Naive thymus-derived CD4-positive, alpha-beta T cell (primary cell): ENCODE measurements at regions of chr11 and their contacts with region 1.

Region 1: DNA sequence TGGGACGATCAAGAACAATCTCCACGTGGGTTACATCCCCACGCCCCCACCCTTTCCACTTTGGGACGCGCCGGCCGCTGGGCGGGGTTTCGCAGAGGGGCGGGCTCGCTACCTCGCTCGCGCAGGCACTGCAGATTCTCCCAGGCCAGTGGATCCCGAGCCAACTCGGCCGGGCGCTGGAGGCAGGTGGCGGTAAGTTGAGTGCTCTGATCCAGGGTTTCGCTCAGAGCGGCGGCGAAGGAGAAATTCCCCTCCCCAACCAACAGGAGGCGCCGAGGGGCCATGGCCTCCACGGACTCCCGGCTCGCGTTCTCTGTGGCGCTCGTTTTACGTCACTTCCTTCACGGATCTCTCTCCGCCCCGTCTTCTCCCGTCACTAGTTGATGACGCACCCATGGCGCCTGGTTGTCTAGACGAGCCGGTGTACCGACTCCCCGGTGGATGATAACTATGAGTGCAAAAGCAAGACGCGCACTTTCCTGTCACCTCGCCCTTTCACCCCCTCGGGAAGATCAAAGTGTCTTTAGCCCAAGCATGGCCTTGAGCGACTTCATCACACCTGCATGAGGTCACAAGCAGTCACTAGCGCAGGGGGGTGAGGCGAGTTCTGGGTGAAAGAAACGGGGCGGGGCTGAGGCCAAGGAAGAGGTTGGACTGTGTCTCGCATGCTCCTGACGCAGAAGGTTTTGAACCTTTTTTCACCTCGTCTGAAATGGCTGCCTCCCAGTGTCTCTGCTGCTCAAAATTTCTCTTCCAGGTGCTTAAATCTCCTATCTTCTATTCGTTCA is at the starts of genes CFAP68 and FDXACB1:
- DNase-seq: peak; percentile 89 to 99 (median 98)
- ATAC-seq: peak; percentile 93
- H3K4me3 ChIP-seq: peak within 1 kb of the TSS; percentile 93
- H3K4me3 Mint-ChIP-seq: peak within 1 kb of the TSS; percentile 83 to 99 (median 95)
- H3K27ac ChIP-seq: peak within 1 kb of the TSS; percentile 96
- H3K27ac Mint-ChIP-seq: peak within 1 kb of the TSS; percentile 98 to 100 (median 100)
- H3K4me1 ChIP-seq: peaks cover 7% of the 10 kb centered on the region in 2 donors
- H3K4me1 Mint-ChIP-seq: peaks cover 9 to 32% (median 26%) of the 10 kb centered on the region in 7 donors
- H3K27me3 ChIP-seq: no peaks in the 10 kb centered on the region
- H3K27me3 Mint-ChIP-seq: no peaks in the 10 kb centered on the region
- total RNA-seq, gene CFAP68: 13.7 to 24.9 (median 18.3) TPM
- total RNA-seq, gene FDXACB1: 2.7 to 6.0 (median 5.3) TPM

Region 2: GRCh38 chr11:111500481-111500880 is 378.6 kb before region 1 on chr11:
- CTCF ChIA-PET with region 1: no interaction called
- POLR2A ChIA-PET with region 1: no interaction called
- intact Hi-C with region 1: no loop called
- DNase-seq: no peak
- ATAC-seq: no peak
- H3K4me3 ChIP-seq: no peak overlapping the region
- H3K4me3 Mint-ChIP-seq: no peak overlapping the region
- H3K27ac ChIP-seq: no peak overlapping the region
- H3K27ac Mint-ChIP-seq: no peak overlapping the region
- H3K4me1 ChIP-seq: no peaks in the 10 kb centered on the region
- H3K4me1 Mint-ChIP-seq: no peaks in the 10 kb centered on the region
- H3K27me3 ChIP-seq: no peaks in the 10 kb centered on the region
- H3K27me3 Mint-ChIP-seq: peaks cover 21 to 67% (median 35%) of the 10 kb centered on the region in 5 donors

Region 3: GRCh38 chr11:111766093-111766833 is 112.8 kb before region 1 on chr11 and contains the start of gene PPP2R1B:
- CTCF ChIA-PET with region 1: no interaction called
- POLR2A ChIA-PET with region 1: no interaction called
- intact Hi-C with region 1: loop called (anchors 1 to 2 kb)
- DNase-seq: peak; percentile 50 to 78 (median 69)
- ATAC-seq: peak; percentile 98
- H3K4me3 ChIP-seq: peak within 1 kb of the TSS; percentile 95
- H3K4me3 Mint-ChIP-seq: peak within 1 kb of the TSS; percentile 94 to 100 (median 98)
- H3K27ac ChIP-seq: peak within 1 kb of the TSS; percentile 86
- H3K27ac Mint-ChIP-seq: peak within 1 kb of the TSS; percentile 83 to 99 (median 95)
- H3K4me1 ChIP-seq: peaks cover 7% of the 10 kb centered on the region in 2 donors
- H3K4me1 Mint-ChIP-seq: peaks cover 25 to 48% (median 38%) of the 10 kb centered on the region in 7 donors
- H3K27me3 ChIP-seq: no peaks in the 10 kb centered on the region
- H3K27me3 Mint-ChIP-seq: no peaks in the 10 kb centered on the region
- total RNA-seq, gene PPP2R1B: 25.8 to 49.2 (median 34.0) TPM

Region 4: DNA sequence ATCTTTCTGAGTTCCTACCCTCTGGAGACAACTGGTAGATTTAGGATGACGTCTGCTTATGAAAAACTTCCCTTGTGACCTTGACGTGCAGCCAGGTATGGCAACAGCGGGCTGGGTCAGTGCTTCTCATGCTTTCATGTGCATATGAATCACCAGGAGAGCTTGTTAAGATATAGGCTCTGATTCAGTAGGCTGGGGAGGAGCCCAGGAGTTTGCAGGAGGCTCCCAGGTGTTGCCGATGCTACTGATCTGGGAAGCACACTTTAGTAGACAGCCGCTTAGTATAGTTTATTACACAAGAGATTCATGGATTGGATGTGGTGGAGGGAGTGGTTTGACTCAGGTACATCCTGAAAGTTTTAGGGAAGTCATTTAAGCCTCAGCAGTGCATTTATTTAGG is 81.9 kb after region 1 on chr11:
- CTCF ChIA-PET with region 1: no interaction called
- POLR2A ChIA-PET with region 1: no interaction called
- intact Hi-C with region 1: no loop called
- DNase-seq: no peak
- ATAC-seq: no peak
- H3K4me3 ChIP-seq: no peak overlapping the region
- H3K4me3 Mint-ChIP-seq: no peak overlapping the region
- H3K27ac ChIP-seq: no peak overlapping the region
- H3K27ac Mint-ChIP-seq: no peak overlapping the region
- H3K4me1 ChIP-seq: no peaks in the 10 kb centered on the region
- H3K4me1 Mint-ChIP-seq: no peaks in the 10 kb centered on the region
- H3K27me3 ChIP-seq: no peaks in the 10 kb centered on the region
- H3K27me3 Mint-ChIP-seq: peaks cover 0 to 4% (median 0%) of the 10 kb centered on the region in 5 donors

Region 5: DNA sequence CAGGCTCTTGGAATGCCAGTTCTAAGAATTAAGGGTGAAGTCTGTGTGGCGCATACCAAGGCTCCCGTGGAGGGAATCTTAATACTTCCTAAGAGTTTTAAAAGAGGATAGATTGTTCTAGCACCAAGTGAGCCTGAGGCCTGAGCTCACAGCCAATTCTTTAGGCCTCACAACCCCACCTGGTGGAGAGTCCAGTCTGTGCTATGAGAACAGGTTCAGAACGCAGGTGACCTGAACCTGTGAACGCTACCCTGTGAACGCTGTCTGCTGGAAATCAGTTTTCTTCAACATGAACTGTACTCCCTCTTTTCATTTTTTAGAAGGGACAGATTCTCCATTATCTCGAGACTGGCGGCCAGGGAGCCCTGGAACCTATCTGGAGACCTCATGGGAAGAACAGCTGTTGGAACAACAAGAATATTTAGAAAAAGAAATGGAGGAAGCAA is 103.0 kb after region 1 on chr11:
- CTCF ChIA-PET with region 1: interaction called, 6 read pairs
- POLR2A ChIA-PET with region 1: no interaction called
- intact Hi-C with region 1: loop called (anchors 1 kb)
- DNase-seq: peak; percentile 7 to 60 (median 44)
- ATAC-seq: peak; percentile 84
- H3K4me3 ChIP-seq: no peak overlapping the region
- H3K4me3 Mint-ChIP-seq: no peak overlapping the region
- H3K27ac ChIP-seq: no peak overlapping the region
- H3K27ac Mint-ChIP-seq: peak overlapping the region in 1 of 9 donors; percentile 22
- H3K4me1 ChIP-seq: peaks cover 0 to 3% of the 10 kb centered on the region in 2 donors
- H3K4me1 Mint-ChIP-seq: peaks cover 0 to 10% (median 7%) of the 10 kb centered on the region in 7 donors
- H3K27me3 ChIP-seq: peaks cover 0 to 3% of the 10 kb centered on the region in 2 donors
- H3K27me3 Mint-ChIP-seq: peaks cover 7 to 29% (median 27%) of the 10 kb centered on the region in 5 donors

Region 6: GRCh38 chr11:112074026-112074811 is 195.2 kb after region 1 on chr11 and contains the start of gene NKAPD1:
- CTCF ChIA-PET with region 1: no interaction called
- POLR2A ChIA-PET with region 1: no interaction called
- intact Hi-C with region 1: loop called (anchors 1 kb)
- DNase-seq: peak; percentile 64 to 88 (median 84)
- ATAC-seq: peak; percentile 94
- H3K4me3 ChIP-seq: peak within 1 kb of the TSS; percentile 97
- H3K4me3 Mint-ChIP-seq: peak within 1 kb of the TSS; percentile 80 to 98 (median 94)
- H3K27ac ChIP-seq: peak within 1 kb of the TSS; percentile 79
- H3K27ac Mint-ChIP-seq: peak within 1 kb of the TSS; percentile 84 to 96 (median 95)
- H3K4me1 ChIP-seq: peaks cover 5 to 11% of the 10 kb centered on the region in 2 donors
- H3K4me1 Mint-ChIP-seq: peaks cover 14 to 49% (median 40%) of the 10 kb centered on the region in 7 donors
- H3K27me3 ChIP-seq: no peaks in the 10 kb centered on the region
- H3K27me3 Mint-ChIP-seq: peaks cover 6 to 22% (median 12%) of the 10 kb centered on the region in 5 donors
- total RNA-seq, gene NKAPD1: 12.4 to 22.9 (median 19.7) TPM

Region 7: DNA sequence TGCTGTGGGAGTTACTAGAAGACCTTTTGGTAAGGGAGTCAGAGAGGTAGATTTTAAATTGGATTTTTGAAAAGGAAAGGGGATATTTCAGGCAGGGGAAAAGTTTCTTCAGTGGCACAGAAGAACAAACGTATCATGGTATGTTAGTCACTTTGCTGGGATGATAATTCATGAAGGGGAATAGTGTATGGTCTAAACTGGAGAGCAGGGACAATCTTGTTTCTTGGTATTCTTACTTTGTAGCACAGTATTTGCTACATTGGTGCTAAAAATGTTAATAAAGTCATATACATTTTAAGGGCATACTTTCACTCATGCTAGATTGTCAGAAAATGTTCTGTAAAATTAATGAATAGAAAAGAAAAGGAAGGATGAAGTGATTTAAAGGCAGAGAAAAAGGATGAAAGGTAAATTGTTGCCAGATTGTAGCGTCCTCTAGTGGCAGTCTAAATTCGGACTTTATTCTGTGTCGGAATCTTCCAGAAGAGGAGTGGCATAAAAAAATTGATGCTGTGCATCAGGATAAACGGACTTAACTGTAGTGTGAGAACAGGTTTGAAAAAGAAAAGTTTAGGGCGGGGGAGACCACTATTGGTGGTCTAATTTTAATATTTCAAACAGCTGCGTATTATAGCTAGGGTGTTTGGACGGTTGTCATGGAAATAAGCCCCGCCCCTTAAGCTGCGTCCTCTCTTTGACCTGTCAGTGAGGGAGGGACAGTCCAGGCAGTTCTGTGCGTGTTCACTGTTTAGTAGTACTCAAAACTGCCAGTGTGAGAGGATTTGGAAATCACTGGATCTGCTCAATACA is 296.0 kb after region 1 on chr11 and contains the start of gene BCO2:
- CTCF ChIA-PET with region 1: no interaction called
- POLR2A ChIA-PET with region 1: no interaction called
- intact Hi-C with region 1: loop called in 1 of 2 experiments (anchors 1 kb)
- DNase-seq: peak in 4 of 9 donors; percentile 0 to 29 (median 15)
- ATAC-seq: peak; percentile 90
- H3K4me3 ChIP-seq: peak within 1 kb of the TSS; percentile 28
- H3K4me3 Mint-ChIP-seq: peak within 1 kb of the TSS; percentile 16 to 75 (median 53)
- H3K27ac ChIP-seq: no peak within 1 kb of the TSS
- H3K27ac Mint-ChIP-seq: no peak within 1 kb of the TSS
- H3K4me1 ChIP-seq: peaks cover 0 to 6% of the 10 kb centered on the region in 2 donors
- H3K4me1 Mint-ChIP-seq: peaks cover 10 to 17% (median 13%) of the 10 kb centered on the region in 7 donors
- H3K27me3 ChIP-seq: no peaks in the 10 kb centered on the region
- H3K27me3 Mint-ChIP-seq: peaks cover 13 to 47% (median 29%) of the 10 kb centered on the region in 5 donors
- total RNA-seq, gene BCO2: 1.5 to 3.8 (median 2.0) TPM

Region 8: DNA sequence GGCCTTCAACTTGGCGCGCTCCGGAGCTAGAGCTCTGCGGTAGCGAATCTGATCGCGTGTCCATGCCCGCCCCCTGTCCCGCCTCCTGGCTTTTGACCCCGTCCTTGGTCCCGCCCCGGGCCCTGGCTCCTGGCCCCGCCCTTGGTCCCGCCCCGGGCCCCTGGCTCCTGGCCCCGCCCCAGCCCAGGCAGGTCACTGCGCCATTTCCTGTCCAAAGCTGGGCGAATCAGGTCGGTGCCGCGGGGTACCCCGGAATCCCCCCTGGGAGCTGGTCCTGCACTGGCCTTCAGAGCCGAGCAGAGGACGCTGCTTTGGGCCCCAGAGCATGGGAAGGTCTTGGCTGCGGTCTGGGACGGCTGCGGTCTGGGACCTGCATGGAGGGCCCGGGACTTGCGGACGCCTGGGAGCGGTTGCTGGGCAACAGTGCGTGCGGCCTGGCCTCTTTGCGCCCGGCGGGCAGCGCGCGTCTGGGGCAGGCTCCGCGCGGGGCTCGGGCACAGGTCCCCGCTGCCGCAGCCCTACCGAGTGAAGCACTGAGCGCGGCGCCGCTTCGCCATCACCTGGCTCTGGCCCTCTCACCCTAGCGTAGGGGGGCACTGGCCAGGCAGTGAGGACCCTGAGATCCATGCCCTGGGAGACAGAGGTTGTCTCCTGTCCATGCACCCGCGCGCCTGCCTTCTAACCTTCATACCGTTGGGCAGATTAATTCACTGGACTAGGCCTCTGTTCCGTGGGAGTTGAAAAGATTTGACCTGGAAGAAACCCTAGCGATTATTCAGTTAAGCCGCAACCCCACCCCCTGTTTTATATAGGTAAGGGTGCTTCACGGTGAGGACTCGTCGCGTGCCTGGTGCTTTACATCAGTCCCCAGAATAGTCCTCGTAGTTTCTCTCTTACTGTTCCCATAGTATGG is 1435.6 kb after region 1 on chr11 and contains the start of gene TTC12:
- CTCF ChIA-PET with region 1: no interaction called
- POLR2A ChIA-PET with region 1: no interaction called
- intact Hi-C with region 1: loop called (anchors 2 kb)
- DNase-seq: peak; percentile 81 to 95 (median 89)
- ATAC-seq: peak; percentile 100
- H3K4me3 ChIP-seq: peak within 1 kb of the TSS; percentile 78
- H3K4me3 Mint-ChIP-seq: peak within 1 kb of the TSS; percentile 77 to 93 (median 88)
- H3K27ac ChIP-seq: peak within 1 kb of the TSS; percentile 91
- H3K27ac Mint-ChIP-seq: peak within 1 kb of the TSS; percentile 75 to 95 (median 92)
- H3K4me1 ChIP-seq: peaks cover 10 to 16% of the 10 kb centered on the region in 2 donors
- H3K4me1 Mint-ChIP-seq: peaks cover 18 to 58% (median 49%) of the 10 kb centered on the region in 7 donors
- H3K27me3 ChIP-seq: no peaks in the 10 kb centered on the region
- H3K27me3 Mint-ChIP-seq: peaks cover 0 to 3% (median 0%) of the 10 kb centered on the region in 5 donors
- total RNA-seq, gene TTC12: 14.1 to 84.5 (median 58.2) TPM